ENCODE measurements at regions of chr2 and their contacts with region 1.

Region 1: DNA sequence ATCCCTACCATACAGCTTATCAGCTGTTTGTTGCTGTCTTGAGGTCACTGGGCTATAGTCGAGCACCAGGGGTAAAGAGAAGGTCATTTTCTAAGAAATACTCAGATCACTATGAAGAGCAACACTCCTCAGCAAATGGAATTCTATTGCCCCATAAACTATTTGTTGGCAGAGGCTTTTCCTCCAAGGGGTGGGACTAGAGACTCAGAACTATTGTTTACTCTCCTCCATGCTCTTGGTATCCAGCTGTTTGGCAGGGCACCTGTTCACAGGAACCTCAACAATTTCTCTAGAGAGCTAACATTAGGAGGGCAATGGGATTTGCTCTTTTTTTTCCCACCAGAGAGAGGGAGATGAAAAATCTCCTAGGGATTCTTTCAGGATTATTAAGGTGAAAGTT is 249.1 kb upstream of the SPRED2 start:
- DNase-seq: no peak
- CTCF ChIP-seq: no peak

Region 2: GRCh38 chr2:65669574-65669973 is 11.9 kb before region 1 on chr2:
- CTCF ChIA-PET with region 1: interaction called, 10 read pairs
- POLR2A ChIA-PET with region 1: no interaction called
- DNase-seq: no peak
- CTCF ChIP-seq: no peak

Region 3: GRCh38 chr2:65746931-65747675 is 65.6 kb after region 1 on chr2:
- CTCF ChIA-PET with region 1: no interaction called
- POLR2A ChIA-PET with region 1: no interaction called
- DNase-seq: no peak
- CTCF ChIP-seq: no peak